Endothelial cell of umbilical vein (primary cell): ENCODE measurements at regions of chr6 and their contacts with region 1.

Region 1: DNA sequence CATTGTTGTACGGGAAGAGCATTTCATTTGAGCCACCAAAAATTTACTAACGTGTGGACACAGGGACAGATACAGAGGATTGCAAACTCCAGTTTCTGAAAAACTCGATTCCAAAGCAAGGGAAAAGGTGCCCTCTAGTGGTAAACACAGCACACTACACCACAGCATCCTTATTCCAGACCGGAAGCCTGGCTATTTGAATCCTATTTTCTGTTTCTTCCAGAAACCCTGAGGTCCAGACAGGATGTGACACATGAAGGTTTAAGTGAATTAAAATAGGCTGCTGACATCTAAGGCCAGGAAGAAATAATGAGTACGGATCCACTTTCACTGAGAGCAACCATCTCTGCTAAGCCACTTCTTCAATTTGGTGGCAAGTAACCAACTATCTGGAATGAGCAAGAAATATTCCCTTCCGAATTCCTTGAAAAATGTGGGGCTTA is 31.8 kb upstream of the GMPR start:
- DNase-seq: peak; percentile 90
- H3K4me3 ChIP-seq: no peak overlapping the region
- H3K27ac ChIP-seq: peak overlapping the region; percentile 75
- H3K4me1 ChIP-seq: peaks cover 14% of the 10 kb centered on the region
- H3K27me3 ChIP-seq: no peaks in the 10 kb centered on the region
- CTCF ChIP-seq: peak; percentile 84 to 94
- POLR2A ChIP-seq: no peak

Region 2: DNA sequence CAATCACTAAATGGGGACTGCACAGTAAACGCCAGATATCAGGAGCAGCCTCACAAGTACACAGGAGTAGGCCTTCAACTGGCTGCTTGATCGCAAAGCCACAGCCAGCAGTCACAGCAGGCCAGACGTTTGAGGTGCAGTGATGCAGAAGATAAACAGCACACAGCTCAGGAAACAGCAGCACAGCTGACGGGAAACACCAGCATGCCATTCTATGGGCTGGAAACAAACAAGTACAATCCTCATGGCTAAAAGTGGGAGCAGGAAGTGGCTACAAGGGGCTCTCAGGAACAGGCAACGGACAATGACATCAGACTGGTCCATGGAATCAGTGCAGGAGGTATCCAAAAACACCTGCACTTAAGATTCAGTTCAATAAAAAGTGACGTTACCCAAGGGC is 654.8 kb before region 1 on chr6:
- CTCF ChIA-PET with region 1: no interaction called
- POLR2A ChIA-PET with region 1: no interaction called
- dilution Hi-C with region 1: no loop called
- intact Hi-C with region 1: loop called (anchors 10 kb)
- DNase-seq: peak; percentile 92
- H3K4me3 ChIP-seq: no peak overlapping the region
- H3K27ac ChIP-seq: peak overlapping the region; percentile 62
- H3K4me1 ChIP-seq: peaks cover 42% of the 10 kb centered on the region
- H3K27me3 ChIP-seq: no peaks in the 10 kb centered on the region
- CTCF ChIP-seq: no peak
- POLR2A ChIP-seq: no peak

Region 3: DNA sequence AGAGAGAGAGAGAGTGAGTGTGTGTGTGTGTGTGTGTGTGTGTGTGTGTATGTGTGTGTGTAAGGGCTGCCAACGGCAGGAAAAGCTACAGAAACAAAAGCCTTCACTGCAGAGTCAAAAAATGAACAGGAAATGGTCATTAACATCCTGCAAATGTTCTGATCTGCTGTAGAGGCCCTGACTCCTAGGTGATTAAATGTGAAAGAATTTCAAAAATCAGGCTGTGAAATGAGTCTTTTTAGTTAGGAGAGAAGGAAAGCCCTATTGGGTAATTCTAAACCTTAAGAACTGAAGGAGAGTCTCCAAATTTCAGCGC is 244.2 kb before region 1 on chr6:
- CTCF ChIA-PET with region 1: no interaction called
- POLR2A ChIA-PET with region 1: no interaction called
- dilution Hi-C with region 1: no loop called
- intact Hi-C with region 1: loop called (anchors 2 kb)
- DNase-seq: peak; percentile 92
- H3K4me3 ChIP-seq: no peak overlapping the region
- H3K27ac ChIP-seq: peak overlapping the region; percentile 91
- H3K4me1 ChIP-seq: peaks cover 20% of the 10 kb centered on the region
- H3K27me3 ChIP-seq: no peaks in the 10 kb centered on the region
- CTCF ChIP-seq: no peak
- POLR2A ChIP-seq: peak; percentile 58

Region 4: DNA sequence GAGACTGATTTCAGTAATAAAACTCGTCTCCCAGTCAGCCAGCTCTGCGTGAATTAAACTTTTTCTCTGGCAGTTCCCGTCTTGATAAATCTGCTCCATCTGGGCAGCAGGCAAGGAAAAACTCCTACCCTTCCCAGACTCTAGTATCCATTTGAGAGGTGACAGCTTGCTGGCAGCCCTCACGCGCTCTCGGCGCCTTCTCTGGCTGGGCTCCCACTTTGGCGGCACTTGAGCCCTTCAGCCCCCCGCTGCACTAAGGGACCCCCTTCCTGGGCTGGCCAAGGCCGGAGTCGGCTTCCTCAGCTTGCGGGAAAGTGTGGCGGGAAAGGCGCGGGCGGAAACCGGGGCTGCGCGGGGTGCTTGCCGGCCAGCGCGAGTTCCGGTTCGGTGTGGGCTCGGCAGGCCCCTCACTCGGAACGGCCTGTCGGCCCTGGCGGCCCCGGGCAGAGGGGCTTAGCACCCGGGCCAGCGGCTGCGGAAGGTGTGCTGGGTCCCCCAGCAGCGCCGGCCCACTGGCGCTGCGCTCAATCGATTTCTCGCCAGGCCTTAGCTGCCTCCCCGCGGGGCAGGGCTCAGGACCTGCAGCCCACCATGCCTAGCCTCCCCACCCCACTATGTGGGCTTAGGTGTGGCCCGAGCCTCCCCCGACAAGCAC is 10.0 kb after region 1 on chr6:
- CTCF ChIA-PET with region 1: interaction called, 10 read pairs
- POLR2A ChIA-PET with region 1: no interaction called
- dilution Hi-C with region 1: no loop called
- intact Hi-C with region 1: loop called (anchors 1 kb)
- DNase-seq: peak; percentile 41
- H3K4me3 ChIP-seq: no peak overlapping the region
- H3K27ac ChIP-seq: peak overlapping the region; percentile 99
- H3K4me1 ChIP-seq: peaks cover 28% of the 10 kb centered on the region
- H3K27me3 ChIP-seq: no peaks in the 10 kb centered on the region
- CTCF ChIP-seq: no peak
- POLR2A ChIP-seq: no peak

Region 5: GRCh38 chr6:16277101-16277981 is 70.7 kb after region 1 on chr6:
- CTCF ChIA-PET with region 1: interaction called, 7 read pairs
- POLR2A ChIA-PET with region 1: no interaction called
- dilution Hi-C with region 1: no loop called
- intact Hi-C with region 1: loop called (anchors 1 kb)
- DNase-seq: peak; percentile 96
- H3K4me3 ChIP-seq: no peak overlapping the region
- H3K27ac ChIP-seq: peak overlapping the region; percentile 73
- H3K4me1 ChIP-seq: peaks cover 9% of the 10 kb centered on the region
- H3K27me3 ChIP-seq: no peaks in the 10 kb centered on the region
- CTCF ChIP-seq: peak; percentile 79 to 80
- POLR2A ChIP-seq: no peak